A673 (cell line): ENCODE measurements at regions of chr14 and their contacts with region 1.

Region 1: DNA sequence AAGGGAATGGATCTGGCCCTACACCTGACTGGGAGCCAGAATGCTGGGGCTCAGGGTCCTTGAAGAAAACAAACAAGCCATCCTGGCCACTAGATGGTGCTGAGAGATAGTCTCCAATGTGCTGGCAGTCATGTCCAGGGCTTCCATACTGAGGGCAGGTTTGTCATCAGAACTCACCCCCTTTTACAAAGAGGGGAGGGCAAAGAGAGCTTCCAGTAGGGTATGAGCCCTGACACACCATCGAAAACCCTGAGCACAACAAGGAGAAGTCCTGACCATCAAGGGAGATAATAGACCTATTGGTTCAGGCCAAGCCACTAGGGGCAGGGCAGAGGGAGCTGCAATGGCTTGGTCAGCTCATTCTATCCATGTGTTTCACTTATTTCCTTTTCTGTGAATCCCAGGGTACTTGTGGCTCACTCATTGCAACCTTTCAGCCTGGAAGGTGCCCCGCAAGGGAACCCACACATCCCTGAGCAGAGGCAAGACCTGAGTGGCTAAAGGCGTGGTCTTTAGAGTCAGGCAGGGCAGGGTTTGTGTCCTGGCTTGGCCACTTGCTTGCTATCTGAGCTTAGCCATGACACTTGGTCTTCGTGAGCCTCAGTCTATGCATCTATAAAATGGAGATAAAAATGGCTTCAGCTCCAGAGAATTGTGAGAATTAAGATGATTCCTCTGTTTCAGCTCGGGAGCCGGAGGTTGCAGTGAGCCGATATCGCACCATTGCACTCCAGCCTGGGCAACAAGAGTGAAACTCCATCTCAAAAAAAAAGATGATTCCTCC is 6.2 kb upstream of the PLEKHH1 start:
- DNase-seq: peak; percentile 70
- H3K4me3 ChIP-seq: no peak overlapping the region
- H3K27ac ChIP-seq: no peak overlapping the region
- H3K4me1 ChIP-seq: peaks cover 5% of the 10 kb centered on the region
- H3K27me3 ChIP-seq: peaks cover 6% of the 10 kb centered on the region
- CTCF ChIP-seq: peak; percentile 87

Region 2: GRCh38 chr14:67079846-67080245 is 447.0 kb before region 1 on chr14:
- CTCF ChIA-PET with region 1: interaction called, 15 read pairs
- POLR2A ChIA-PET with region 1: no interaction called
- intact Hi-C with region 1: no loop called
- DNase-seq: no peak
- H3K4me3 ChIP-seq: no peak overlapping the region
- H3K27ac ChIP-seq: no peak overlapping the region
- H3K4me1 ChIP-seq: no peaks in the 10 kb centered on the region
- H3K27me3 ChIP-seq: no peaks in the 10 kb centered on the region
- CTCF ChIP-seq: no peak

Region 3: DNA sequence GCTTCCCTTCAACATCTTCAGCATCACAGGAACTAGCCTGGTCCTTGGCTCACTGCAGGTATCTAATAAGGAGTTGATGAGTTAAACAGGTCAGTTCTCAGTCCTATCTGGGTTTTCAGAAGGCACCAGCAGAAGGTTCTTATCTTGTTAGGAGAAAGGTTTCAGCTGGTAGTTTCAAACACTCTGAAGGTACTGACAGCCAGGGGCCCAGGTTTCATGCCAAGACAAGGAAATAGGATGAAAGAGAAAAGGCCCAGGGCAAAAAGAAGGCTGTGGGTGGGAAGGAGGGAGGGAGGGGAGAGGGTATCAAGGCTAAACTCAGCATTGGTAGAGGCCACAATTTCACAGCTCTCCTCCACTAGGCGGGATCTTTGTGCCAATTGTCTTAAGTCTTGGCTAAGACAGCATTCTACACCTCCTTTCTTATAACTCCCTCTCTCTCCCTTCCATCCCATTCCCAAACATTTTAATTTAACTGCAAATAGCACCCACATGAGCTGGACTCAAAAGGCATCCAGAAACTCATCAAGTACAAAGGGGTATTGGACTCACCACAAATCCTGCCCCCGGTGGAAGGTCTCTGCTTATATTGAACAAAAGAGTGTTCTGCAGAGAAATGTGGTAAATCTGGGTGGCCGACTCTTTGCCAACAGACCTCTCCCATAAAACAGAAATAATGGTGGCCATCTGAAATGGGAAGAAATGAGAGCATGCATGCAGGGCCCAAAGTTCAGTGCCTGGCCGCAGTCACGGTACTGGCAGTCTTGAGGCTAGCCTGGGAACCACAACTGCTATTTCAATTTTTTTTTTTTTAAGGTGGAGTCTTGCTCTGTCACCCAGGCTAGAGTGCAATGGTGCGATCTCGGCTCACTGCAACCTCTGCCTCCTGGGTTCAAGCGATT is 59.4 kb before region 1 on chr14:
- CTCF ChIA-PET with region 1: no interaction called
- POLR2A ChIA-PET with region 1: no interaction called
- intact Hi-C with region 1: no loop called
- DNase-seq: no peak
- H3K4me3 ChIP-seq: no peak overlapping the region
- H3K27ac ChIP-seq: no peak overlapping the region
- H3K4me1 ChIP-seq: no peaks in the 10 kb centered on the region
- H3K27me3 ChIP-seq: no peaks in the 10 kb centered on the region
- CTCF ChIP-seq: peak; percentile 26

Region 4: GRCh38 chr14:67508956-67509355 is 17.9 kb before region 1 on chr14:
- CTCF ChIA-PET with region 1: interaction called, 11 read pairs
- POLR2A ChIA-PET with region 1: no interaction called
- intact Hi-C with region 1: no loop called
- DNase-seq: no peak
- H3K4me3 ChIP-seq: no peak overlapping the region
- H3K27ac ChIP-seq: no peak overlapping the region
- H3K4me1 ChIP-seq: no peaks in the 10 kb centered on the region
- H3K27me3 ChIP-seq: no peaks in the 10 kb centered on the region
- CTCF ChIP-seq: no peak

Region 5: DNA sequence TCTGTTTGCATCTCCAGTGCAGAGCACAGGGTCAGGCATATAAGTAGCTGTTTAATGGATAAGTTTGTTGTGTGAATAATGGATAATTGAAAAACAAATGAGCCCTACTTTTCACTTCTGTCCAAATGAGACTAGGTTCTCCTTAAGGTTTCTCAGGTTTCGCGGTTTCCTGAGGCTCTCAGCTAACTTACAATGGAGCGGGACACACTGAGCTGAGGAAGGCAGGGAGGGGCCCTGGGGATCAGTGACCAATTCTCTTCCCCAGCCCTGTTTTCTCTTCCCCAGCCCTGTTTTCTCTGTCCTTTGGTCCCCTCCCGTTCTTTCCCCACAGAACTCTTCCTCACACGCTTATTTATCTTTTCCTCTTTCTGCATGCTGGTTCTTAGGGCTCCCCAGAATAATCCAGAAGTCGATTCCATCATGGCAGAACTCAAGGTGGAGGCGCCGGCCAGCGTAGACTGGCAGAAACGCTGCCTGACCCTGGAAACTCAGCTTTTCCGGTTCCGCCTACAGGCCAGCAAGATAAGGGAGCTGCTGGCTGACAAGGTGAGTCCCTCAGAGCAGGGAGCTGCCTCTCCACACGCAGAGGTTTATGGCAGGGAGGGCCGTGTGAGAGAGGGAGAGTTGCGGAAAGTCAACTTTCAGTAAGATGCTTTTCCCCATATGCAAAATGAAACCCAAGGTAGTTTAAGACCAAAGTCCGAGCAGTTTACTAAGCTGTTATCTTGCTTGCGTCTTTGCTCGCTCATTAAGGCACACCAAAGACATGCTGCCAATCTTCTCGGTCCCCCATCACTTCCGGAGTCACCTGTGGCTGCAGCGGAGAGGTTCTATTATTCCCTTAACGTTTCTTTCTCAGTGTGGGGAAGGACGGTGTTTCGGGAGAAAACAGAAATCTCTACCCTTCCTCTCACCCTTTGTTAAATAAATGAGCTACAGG is 14.8 kb after region 1 on chr14:
- CTCF ChIA-PET with region 1: no interaction called
- POLR2A ChIA-PET with region 1: interaction called, 15 read pairs
- intact Hi-C with region 1: no loop called
- DNase-seq: no peak
- H3K4me3 ChIP-seq: no peak overlapping the region
- H3K27ac ChIP-seq: no peak overlapping the region
- H3K4me1 ChIP-seq: no peaks in the 10 kb centered on the region
- H3K27me3 ChIP-seq: no peaks in the 10 kb centered on the region
- CTCF ChIP-seq: no peak

Region 6: GRCh38 chr14:67571272-67571850 is 44.5 kb after region 1 on chr14:
- CTCF ChIA-PET with region 1: interaction called, 13 read pairs
- POLR2A ChIA-PET with region 1: no interaction called
- intact Hi-C with region 1: loop called (anchors 1 kb)
- DNase-seq: peak; percentile 65
- H3K4me3 ChIP-seq: no peak overlapping the region
- H3K27ac ChIP-seq: no peak overlapping the region
- H3K4me1 ChIP-seq: no peaks in the 10 kb centered on the region
- H3K27me3 ChIP-seq: no peaks in the 10 kb centered on the region
- CTCF ChIP-seq: peak; percentile 95

Region 7: DNA sequence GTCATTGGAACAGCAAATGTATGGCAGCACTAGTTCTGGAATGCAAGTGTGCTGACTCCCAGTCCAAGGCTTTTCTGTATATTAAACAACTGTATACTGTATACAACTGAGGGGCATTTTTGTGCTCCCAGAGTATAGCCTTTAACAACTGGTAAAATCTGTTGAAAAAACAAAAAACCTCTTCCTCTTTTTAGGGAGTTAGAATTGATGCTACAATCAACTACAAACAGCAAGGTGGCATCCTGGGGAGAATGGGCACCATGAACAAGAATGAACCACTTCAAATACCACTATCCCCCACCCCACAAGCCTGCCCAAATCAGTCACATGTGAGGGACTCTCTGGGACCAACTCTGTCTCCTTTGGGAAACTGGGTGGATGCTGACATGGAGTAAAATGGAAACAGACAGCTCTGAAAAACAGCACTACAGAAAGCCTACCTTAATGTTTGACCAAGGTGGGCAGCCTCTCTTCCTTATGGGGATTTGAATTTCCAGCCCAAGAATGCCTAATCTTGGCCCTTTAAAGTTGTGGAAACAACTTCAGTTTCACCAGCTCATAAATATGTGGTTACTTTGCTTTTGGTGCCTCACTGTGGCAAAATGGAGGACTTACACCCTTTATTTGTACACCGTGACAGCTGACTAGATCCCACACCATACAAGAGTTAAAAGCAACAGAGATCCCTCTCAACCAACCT is 140.0 kb after region 1 on chr14:
- CTCF ChIA-PET with region 1: interaction called, 12 read pairs
- POLR2A ChIA-PET with region 1: no interaction called
- intact Hi-C with region 1: loop called (anchors 2 kb)
- DNase-seq: peak; percentile 74
- H3K4me3 ChIP-seq: no peak overlapping the region
- H3K27ac ChIP-seq: no peak overlapping the region
- H3K4me1 ChIP-seq: no peaks in the 10 kb centered on the region
- H3K27me3 ChIP-seq: no peaks in the 10 kb centered on the region
- CTCF ChIP-seq: peak; percentile 73

Region 8: GRCh38 chr14:67704484-67705089 is 177.7 kb after region 1 on chr14:
- CTCF ChIA-PET with region 1: interaction called, 11 read pairs
- POLR2A ChIA-PET with region 1: no interaction called
- intact Hi-C with region 1: loop called (anchors 10 kb)
- DNase-seq: peak; percentile 76
- H3K4me3 ChIP-seq: no peak overlapping the region
- H3K27ac ChIP-seq: no peak overlapping the region
- H3K4me1 ChIP-seq: no peaks in the 10 kb centered on the region
- H3K27me3 ChIP-seq: no peaks in the 10 kb centered on the region
- CTCF ChIP-seq: peak; percentile 81